ENCODE measurements at regions of chr9 and their contacts with region 1.

Region 1: GRCh38 chr9:34403554-34404380 is 27.1 kb upstream of the MYORG start:
- DNase-seq: peak in 1 of 2 experiments; percentile 90
- H3K4me3 ChIP-seq: no peak overlapping the region
- H3K27ac ChIP-seq: no peak overlapping the region
- H3K4me1 ChIP-seq: no peaks in the 10 kb centered on the region
- H3K27me3 ChIP-seq: no peaks in the 10 kb centered on the region
- CTCF ChIP-seq: peak; percentile 79 to 98 (median 98)
- EP300 ChIP-seq: no peak
- POLR2A ChIP-seq: no peak
- RAD21 ChIP-seq: peak; percentile 86 to 92

Region 2: DNA sequence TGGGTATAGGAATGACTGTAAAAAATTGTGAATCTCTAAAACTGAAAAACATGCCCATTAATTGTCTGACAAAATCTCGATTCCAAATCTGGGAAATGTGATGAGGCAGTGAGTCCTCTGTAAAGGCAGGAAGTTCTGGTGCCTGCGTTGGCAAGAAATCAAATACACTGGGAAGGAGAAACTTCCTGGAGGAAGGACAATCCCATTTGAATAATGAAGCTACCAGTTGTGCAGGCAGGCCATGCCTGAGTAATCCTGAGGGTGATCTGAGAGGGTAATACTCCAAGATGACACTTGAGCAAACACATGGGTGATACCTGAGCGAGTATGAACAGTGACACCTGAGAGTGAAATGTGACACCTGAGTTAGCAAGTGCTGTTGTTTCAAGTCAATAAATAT is 124.4 kb before region 1 on chr9:
- CTCF ChIA-PET with region 1: no interaction called
- POLR2A ChIA-PET with region 1: no interaction called
- DNase-seq: no peak
- H3K4me3 ChIP-seq: no peak overlapping the region
- H3K27ac ChIP-seq: no peak overlapping the region
- H3K4me1 ChIP-seq: no peaks in the 10 kb centered on the region
- H3K27me3 ChIP-seq: no peaks in the 10 kb centered on the region
- CTCF ChIP-seq: no peak
- EP300 ChIP-seq: no peak
- POLR2A ChIP-seq: no peak
- RAD21 ChIP-seq: no peak

Region 3: DNA sequence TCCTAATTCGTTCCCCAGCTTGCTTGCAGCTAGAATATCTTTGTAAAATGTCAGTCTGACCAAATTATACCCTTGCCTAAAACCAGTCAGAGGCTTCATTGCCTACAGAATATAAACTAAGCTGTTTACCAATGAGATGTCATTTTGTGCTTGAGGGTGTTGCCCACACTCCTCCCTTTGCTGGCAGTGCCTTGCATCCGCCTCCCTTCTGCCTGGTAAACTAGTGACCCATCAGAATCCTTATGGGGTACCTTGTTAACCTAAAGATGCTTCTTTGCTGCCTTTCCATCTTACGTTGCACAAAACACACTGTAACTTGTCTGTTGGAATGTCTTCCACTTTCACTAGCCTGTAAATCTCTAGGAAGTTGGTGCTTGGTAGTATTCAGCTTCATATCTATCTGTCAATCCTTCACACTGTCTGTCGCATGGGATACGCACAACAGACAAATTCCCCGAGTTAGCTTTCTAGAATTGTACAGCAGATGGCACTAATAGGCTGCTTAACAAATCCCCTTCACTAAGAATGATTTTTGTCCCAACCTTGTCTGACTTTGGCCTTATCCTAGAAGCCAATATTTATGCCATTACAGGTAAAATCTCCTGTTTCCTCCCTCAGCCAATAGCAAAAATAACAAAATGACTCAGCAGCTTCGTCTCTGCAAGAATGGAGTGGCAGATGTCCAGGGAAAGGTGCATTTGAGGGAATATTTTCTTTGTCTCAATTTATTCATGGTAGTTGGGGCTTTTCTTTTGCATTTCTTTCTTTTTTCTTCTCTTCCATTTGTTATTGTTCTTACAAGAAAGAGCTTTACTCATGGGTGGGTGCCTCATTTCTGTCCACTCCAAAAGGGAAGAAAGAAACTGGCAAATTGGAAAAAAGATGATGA is 71.4 kb before region 1 on chr9:
- CTCF ChIA-PET with region 1: interaction called, 13 read pairs
- POLR2A ChIA-PET with region 1: interaction called, 3 read pairs
- DNase-seq: no peak
- H3K4me3 ChIP-seq: no peak overlapping the region
- H3K27ac ChIP-seq: no peak overlapping the region
- H3K4me1 ChIP-seq: peaks cover 2 to 10% (median 9%) of the 10 kb centered on the region in 4 experiments; a peak in 5 of 7 replicates
- H3K27me3 ChIP-seq: no peaks in the 10 kb centered on the region
- CTCF ChIP-seq: peak in 2 of 3 experiments; percentile 41 to 43; a peak in 2 of 4 replicates
- EP300 ChIP-seq: no peak
- POLR2A ChIP-seq: no peak
- RAD21 ChIP-seq: peak; percentile 70 to 78

Region 4: GRCh38 chr9:34392511-34392910 is 11.3 kb before region 1 on chr9:
- CTCF ChIA-PET with region 1: interaction called, 21 read pairs
- POLR2A ChIA-PET with region 1: no interaction called
- DNase-seq: no peak
- H3K4me3 ChIP-seq: no peak overlapping the region
- H3K27ac ChIP-seq: no peak overlapping the region
- H3K4me1 ChIP-seq: no peaks in the 10 kb centered on the region
- H3K27me3 ChIP-seq: no peaks in the 10 kb centered on the region
- CTCF ChIP-seq: no peak
- EP300 ChIP-seq: no peak
- POLR2A ChIP-seq: no peak
- RAD21 ChIP-seq: no peak

Region 5: DNA sequence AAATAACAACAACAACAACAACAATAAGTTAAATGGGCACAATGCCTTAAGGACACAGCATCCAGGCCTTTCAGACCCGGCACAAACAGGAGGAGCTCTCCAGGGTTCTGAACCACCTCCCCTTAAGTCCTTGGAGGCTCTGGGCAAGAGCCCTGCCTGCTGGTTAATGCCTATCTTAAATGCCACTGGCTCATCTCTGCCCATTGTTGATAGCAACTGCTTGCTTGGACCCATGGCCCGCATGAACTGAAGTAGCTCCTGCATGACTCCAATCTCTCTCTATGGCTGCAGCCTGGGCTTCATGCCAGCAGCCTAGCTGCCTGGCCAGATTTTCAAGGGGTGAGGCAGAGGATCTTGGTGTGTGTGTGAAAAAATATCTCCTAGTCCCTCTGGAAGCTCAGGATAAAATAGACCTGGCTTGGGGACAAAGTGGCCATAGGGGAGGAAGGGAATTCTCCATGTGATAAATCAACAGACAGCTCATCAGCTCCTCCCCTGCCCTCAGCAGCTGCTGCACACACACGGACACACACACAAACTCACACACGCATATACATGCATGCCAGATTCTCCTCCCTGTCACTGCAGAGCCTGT is 27.2 kb after region 1 on chr9:
- CTCF ChIA-PET with region 1: interaction called, 28 read pairs
- POLR2A ChIA-PET with region 1: no interaction called
- DNase-seq: peak; percentile 34 to 69
- H3K4me3 ChIP-seq: no peak overlapping the region
- H3K27ac ChIP-seq: no peak overlapping the region
- H3K4me1 ChIP-seq: no peaks in the 10 kb centered on the region
- H3K27me3 ChIP-seq: no peaks in the 10 kb centered on the region
- CTCF ChIP-seq: no peak
- EP300 ChIP-seq: no peak
- POLR2A ChIP-seq: no peak
- RAD21 ChIP-seq: peak in 1 of 2 experiments; percentile 8; a peak in 1 of 4 replicates

Region 6: DNA sequence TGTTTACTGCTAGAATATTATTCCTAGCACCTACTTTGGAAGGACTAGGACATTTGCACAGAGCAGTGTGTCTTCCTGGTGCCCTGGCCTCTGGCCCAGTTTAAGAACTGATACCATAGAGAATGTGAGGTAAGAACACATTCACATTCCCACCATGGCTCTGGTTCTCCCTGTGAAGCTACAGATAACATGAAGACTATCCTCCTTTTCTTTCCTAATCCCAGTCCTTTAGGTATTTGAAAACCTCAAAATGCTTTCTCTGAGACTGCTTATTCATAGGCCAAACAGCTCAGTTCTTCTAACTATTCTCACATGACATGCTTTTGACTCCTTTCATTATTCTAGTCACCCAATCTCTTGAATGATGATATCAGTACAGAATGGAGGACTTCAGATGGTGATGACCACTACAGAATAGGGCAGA is 42.7 kb after region 1 on chr9:
- CTCF ChIA-PET with region 1: interaction called, 28 read pairs
- POLR2A ChIA-PET with region 1: no interaction called
- DNase-seq: no peak
- H3K4me3 ChIP-seq: no peak overlapping the region
- H3K27ac ChIP-seq: no peak overlapping the region
- H3K4me1 ChIP-seq: peaks cover 2 to 6% (median 5%) of the 10 kb centered on the region in 4 experiments; a peak in 4 of 7 replicates
- H3K27me3 ChIP-seq: no peaks in the 10 kb centered on the region
- CTCF ChIP-seq: no peak
- EP300 ChIP-seq: no peak
- POLR2A ChIP-seq: no peak
- RAD21 ChIP-seq: no peak

Region 7: GRCh38 chr9:34493972-34494535 is 90.3 kb after region 1 on chr9:
- CTCF ChIA-PET with region 1: interaction called, 33 read pairs
- POLR2A ChIA-PET with region 1: no interaction called
- DNase-seq: peak in 1 of 2 experiments; percentile 84
- H3K4me3 ChIP-seq: no peak overlapping the region
- H3K27ac ChIP-seq: no peak overlapping the region
- H3K4me1 ChIP-seq: no peaks in the 10 kb centered on the region
- H3K27me3 ChIP-seq: no peaks in the 10 kb centered on the region; a peak in 1 of 7 replicates
- CTCF ChIP-seq: no peak
- EP300 ChIP-seq: no peak
- POLR2A ChIP-seq: no peak
- RAD21 ChIP-seq: no peak

Region 8: DNA sequence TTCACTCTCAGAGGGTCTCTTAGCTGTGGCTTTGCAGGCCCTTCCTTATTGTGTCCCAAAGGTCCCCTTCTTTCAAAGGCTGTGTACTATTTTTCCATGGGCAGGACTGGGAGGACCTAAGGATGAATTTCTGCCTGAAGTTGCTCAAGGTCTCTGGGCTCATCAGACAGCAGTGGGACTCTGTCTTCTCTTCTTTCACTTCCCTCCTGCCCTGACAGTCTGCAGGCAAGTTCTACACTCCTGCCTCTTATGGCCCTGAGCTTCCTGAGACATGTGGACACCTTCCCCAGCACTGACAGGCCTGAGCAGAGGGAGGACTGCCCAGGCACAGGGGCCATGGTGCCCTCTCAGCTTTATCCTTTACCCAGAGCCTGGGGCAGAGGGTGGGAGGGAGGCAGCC is 104.2 kb after region 1 on chr9:
- CTCF ChIA-PET with region 1: interaction called, 56 read pairs
- POLR2A ChIA-PET with region 1: no interaction called
- DNase-seq: no peak
- H3K4me3 ChIP-seq: no peak overlapping the region
- H3K27ac ChIP-seq: no peak overlapping the region
- H3K4me1 ChIP-seq: peaks cover 6 to 22% (median 13%) of the 10 kb centered on the region in 4 experiments
- H3K27me3 ChIP-seq: no peaks in the 10 kb centered on the region
- CTCF ChIP-seq: no peak
- EP300 ChIP-seq: no peak
- POLR2A ChIP-seq: no peak
- RAD21 ChIP-seq: no peak

Measured in H1 (cell line).